ENCODE measurements at regions of chr5 and their contacts with region 1.

Region 1: DNA sequence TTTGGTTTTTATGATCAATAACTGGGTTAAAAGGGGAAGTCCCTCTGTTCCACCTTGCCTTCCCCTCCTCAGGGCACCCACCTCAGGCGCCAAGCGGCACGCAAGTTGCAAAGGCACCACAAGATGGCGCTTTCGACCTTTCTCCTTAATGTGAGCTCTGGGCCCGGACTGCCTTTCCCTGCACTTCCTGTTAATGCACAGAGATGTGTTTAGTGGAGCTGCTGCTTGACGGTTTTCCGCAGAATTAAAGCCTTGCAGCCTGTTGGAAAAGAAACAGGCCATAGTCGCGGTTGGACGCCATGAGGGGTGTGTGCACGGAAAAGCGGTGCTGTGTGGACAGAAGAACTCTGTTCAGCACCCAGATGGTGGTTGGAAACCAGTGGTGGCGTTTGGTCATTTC is 17.9 kb downstream of the CXCL14 start:
- DNase-seq: peak in 5 of 6 donors; percentile 57 to 89 (median 71)
- ATAC-seq: peak; percentile 84 to 100 (median 98)
- H3K4me3 ChIP-seq: no peak overlapping the region
- H3K27ac ChIP-seq: no peak overlapping the region
- H3K4me1 ChIP-seq: no peaks in the 10 kb centered on the region
- H3K27me3 ChIP-seq: peaks cover 0 to 7% (median 2%) of the 10 kb centered on the region in 4 donors
- CTCF ChIP-seq: peak; percentile 49 to 74 (median 70)

Region 2: GRCh38 chr5:135739383-135739981 is 178.6 kb after region 1 on chr5:
- intact Hi-C with region 1: loop called in 1 of 3 experiments (anchors 10 kb)
- DNase-seq: no peak
- ATAC-seq: peak in 2 of 4 donors; percentile 56 to 63
- H3K4me3 ChIP-seq: no peak overlapping the region
- H3K27ac ChIP-seq: no peak overlapping the region
- H3K4me1 ChIP-seq: no peaks in the 10 kb centered on the region
- H3K27me3 ChIP-seq: no peaks in the 10 kb centered on the region
- CTCF ChIP-seq: no peak